HCT116 (cell line): ENCODE measurements at regions of chr5 and their contacts with region 1.

Region 1: GRCh38 chr5:102511666-102512065 is 12.9 kb upstream of the SLCO6A1 start:
- DNase-seq: no peak
- ATAC-seq: no peak
- H3K4me3 ChIP-seq: no peak overlapping the region
- H3K27ac ChIP-seq: no peak overlapping the region
- H3K4me1 ChIP-seq: no peaks in the 10 kb centered on the region
- H3K27me3 ChIP-seq: no peaks in the 10 kb centered on the region
- CTCF ChIP-seq: no peak
- POLR2A ChIP-seq: no peak
- RAD21 ChIP-seq: no peak

Region 2: DNA sequence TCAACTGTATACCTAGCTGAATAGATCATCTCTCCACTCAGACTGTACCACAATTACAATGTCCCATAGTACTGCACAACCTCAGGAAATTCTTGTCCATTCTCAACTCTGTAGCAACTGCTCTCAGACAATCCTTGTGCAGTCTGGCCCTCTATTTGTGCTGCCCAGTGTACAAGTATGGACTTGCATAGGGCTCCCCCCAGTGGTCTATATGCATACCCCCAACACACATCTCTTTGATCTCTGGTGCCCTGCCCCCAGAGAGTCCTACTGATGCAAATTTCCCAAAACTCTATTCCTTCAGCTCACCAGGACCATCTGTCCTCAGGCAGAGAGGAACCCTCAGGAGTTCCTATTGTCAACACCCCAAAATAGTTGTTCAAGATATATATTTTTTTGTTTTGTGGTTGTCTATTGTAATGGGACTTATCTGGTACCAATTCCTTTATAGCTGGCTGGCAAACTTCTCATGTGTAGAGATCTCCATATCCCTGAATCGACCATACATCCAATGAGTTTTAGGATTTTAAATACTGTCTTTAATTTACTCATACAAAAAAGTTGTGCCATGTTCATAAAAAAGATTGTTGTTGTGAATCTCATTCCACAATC is 420.8 kb before region 1 on chr5:
- CTCF ChIA-PET with region 1: no interaction called
- POLR2A ChIA-PET with region 1: no interaction called
- RAD21 ChIA-PET with region 1: no interaction called
- intact Hi-C with region 1: loop called (anchors 10 kb)
- DNase-seq: peak; percentile 36
- ATAC-seq: peak; percentile 98
- H3K4me3 ChIP-seq: no peak overlapping the region
- H3K27ac ChIP-seq: no peak overlapping the region
- H3K4me1 ChIP-seq: no peaks in the 10 kb centered on the region
- H3K27me3 ChIP-seq: no peaks in the 10 kb centered on the region
- CTCF ChIP-seq: peak; percentile 28 to 67 (median 62); a peak in 5 of 6 replicates
- POLR2A ChIP-seq: no peak
- RAD21 ChIP-seq: peak; percentile 65

Region 3: GRCh38 chr5:102453716-102454115 is 58.0 kb before region 1 on chr5:
- CTCF ChIA-PET with region 1: interaction called, 3 read pairs
- POLR2A ChIA-PET with region 1: no interaction called
- RAD21 ChIA-PET with region 1: no interaction called
- intact Hi-C with region 1: loop called (anchors 1 kb)
- DNase-seq: no peak
- ATAC-seq: no peak
- H3K4me3 ChIP-seq: no peak overlapping the region
- H3K27ac ChIP-seq: no peak overlapping the region
- H3K4me1 ChIP-seq: no peaks in the 10 kb centered on the region
- H3K27me3 ChIP-seq: no peaks in the 10 kb centered on the region
- CTCF ChIP-seq: no peak
- POLR2A ChIP-seq: no peak
- RAD21 ChIP-seq: no peak

Region 4: DNA sequence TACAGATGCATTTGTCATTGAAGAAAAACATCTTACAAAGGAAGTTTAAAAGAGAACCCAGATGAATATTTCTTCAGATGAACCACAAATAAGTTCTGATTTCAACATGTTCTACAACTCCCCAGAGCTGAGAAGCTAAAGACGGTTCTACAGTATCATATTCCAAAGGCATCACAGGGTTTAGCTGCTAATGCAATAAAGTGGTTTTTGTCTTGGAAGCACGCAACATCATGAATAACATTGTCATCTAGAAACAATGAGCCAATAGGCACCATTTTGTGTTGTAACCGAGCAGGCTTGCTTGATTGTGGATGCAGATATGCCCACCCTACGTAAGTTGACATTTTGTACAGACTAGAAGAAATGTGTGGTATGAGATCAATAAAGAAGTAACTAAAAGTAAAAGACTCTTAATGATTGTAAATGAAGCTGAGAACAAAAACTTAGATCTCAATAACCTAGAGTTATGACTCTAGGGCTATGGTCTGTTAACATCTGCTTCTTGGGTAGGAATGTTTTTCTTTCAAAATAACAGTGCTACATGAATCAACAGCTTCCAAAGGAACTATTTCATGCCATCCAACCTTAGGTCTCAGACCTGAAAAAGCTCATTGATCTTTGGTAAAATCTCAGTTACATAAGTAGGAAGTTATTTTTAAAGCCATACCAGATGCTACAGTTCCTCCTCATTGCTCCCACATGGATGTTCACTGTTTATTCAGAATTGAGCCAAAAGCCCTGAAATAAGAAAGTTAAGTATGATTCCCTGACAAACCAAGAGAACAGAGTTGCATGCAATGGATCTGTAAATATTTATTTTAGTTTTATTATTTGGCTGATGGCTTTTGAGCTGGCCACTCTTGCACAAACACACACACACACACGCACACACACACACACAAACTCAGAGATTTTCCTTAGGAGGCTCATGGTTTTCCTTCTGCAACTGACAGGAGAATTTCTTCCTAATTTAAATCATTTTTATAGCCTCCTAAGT is 105.8 kb after region 1 on chr5:
- CTCF ChIA-PET with region 1: no interaction called
- POLR2A ChIA-PET with region 1: no interaction called
- RAD21 ChIA-PET with region 1: no interaction called
- intact Hi-C with region 1: no loop called
- DNase-seq: no peak
- ATAC-seq: no peak
- H3K4me3 ChIP-seq: no peak overlapping the region
- H3K27ac ChIP-seq: no peak overlapping the region
- H3K4me1 ChIP-seq: no peaks in the 10 kb centered on the region
- H3K27me3 ChIP-seq: no peaks in the 10 kb centered on the region
- CTCF ChIP-seq: no peak
- POLR2A ChIP-seq: no peak
- RAD21 ChIP-seq: no peak

Region 5: GRCh38 chr5:103450333-103451061 is 938.8 kb after region 1 on chr5:
- CTCF ChIA-PET with region 1: no interaction called
- POLR2A ChIA-PET with region 1: no interaction called
- RAD21 ChIA-PET with region 1: no interaction called
- intact Hi-C with region 1: no loop called
- DNase-seq: no peak
- ATAC-seq: no peak
- H3K4me3 ChIP-seq: no peak overlapping the region
- H3K27ac ChIP-seq: no peak overlapping the region
- H3K4me1 ChIP-seq: peaks cover 0 to 5% of the 10 kb centered on the region in 2 experiments; a peak in 1 of 4 replicates
- H3K27me3 ChIP-seq: no peaks in the 10 kb centered on the region
- CTCF ChIP-seq: no peak
- POLR2A ChIP-seq: no peak
- RAD21 ChIP-seq: no peak